ENCODE measurements at regions of chr5 and their contacts with region 1.

Region 1: DNA sequence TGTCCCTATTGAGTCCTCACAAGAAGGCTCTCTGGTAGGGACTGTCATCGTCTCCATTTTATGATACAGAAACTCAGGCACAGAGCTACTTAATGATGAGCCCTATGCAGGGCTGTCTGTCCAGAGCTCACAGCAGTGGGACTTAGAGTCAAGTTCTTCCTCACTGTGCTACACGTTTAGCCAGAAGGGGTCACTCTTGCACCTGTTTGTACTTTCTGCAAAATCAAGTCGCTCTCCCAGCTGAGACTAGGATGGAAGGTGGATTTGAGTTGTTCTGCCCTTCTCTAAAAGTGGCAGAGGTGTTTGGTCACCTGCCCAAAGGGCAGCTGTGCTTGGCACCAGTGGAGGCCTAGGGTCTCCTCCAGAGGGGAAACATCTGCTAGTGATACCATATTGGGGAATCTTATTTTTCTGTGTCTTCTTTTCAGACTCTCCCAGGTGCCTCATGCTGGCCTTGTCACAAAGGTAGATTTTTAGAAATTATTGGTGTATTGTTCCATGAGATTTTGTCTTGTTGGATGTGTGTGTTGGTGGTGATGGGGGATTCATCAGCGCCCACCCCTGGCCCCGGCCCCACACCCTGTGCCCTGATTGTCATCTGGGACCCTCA is 104.2 kb downstream of the PPARGC1B start:
- DNase-seq: peak; percentile 86
- H3K4me3 ChIP-seq: no peak overlapping the region
- H3K27ac ChIP-seq: no peak overlapping the region
- H3K4me1 ChIP-seq: peaks cover 1% of the 10 kb centered on the region
- H3K27me3 ChIP-seq: no peaks in the 10 kb centered on the region
- CTCF ChIP-seq: peak; percentile 79 to 80
- POLR2A ChIP-seq: no peak

Region 2: GRCh38 chr5:149636851-149637246 is 197.5 kb before region 1 on chr5:
- CTCF ChIA-PET with region 1: interaction called, 278 read pairs
- POLR2A ChIA-PET with region 1: no interaction called
- dilution Hi-C with region 1: loop called (anchors 10 kb)
- intact Hi-C with region 1: no loop called
- DNase-seq: peak; percentile 57
- H3K4me3 ChIP-seq: no peak overlapping the region
- H3K27ac ChIP-seq: no peak overlapping the region
- H3K4me1 ChIP-seq: peaks cover 12% of the 10 kb centered on the region
- H3K27me3 ChIP-seq: no peaks in the 10 kb centered on the region
- CTCF ChIP-seq: peak; percentile 72 to 74
- POLR2A ChIP-seq: no peak

Region 3: DNA sequence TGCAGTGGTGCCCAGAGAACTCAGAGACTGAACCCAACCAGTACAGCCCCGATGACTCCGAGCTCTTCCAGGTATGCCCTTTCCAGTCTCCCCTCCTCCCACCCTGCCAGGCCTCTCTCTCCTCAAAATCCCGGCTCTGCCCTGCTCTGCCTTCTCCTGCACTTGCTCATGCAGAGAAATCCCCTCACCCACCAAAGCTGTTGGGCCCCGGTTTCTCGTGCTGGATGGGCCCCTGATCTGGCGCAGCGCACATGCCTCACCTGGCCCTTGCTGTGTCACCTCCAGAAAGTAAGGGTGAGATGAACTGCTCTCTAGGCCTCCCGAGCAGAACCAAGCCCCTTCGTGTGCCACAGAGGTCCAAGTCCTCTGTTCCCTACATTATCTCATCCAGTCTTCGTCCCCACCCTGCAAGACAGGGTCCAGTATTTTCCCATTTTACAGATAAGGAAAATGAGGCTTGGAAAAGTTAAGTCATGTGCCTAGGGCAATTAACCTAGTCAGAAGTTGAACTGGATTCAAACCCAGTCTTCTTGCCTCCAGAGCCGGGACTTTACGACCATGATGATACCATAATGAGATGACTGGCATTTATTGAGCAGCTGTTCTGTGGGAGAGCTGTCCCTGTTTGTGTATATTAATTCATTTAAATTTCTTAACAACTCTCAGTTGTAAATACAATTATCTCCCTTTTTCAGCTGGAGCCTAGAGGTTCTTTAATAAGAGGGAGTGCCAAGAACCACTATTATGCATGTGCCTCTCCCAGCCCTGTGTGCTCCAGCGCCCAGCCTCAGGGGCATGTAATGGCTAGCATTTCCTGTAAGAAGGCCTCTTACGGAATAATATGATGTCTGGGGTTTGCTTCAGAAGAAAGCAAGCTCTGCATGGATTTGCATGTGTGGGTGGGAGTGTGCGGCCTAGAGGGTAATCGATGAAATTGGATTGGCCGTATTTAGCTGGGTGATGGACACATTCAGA is 13.5 kb before region 1 on chr5:
- CTCF ChIA-PET with region 1: interaction called, 26 read pairs
- POLR2A ChIA-PET with region 1: no interaction called
- dilution Hi-C with region 1: no loop called
- intact Hi-C with region 1: no loop called
- DNase-seq: no peak
- H3K4me3 ChIP-seq: no peak overlapping the region
- H3K27ac ChIP-seq: no peak overlapping the region
- H3K4me1 ChIP-seq: no peaks in the 10 kb centered on the region
- H3K27me3 ChIP-seq: no peaks in the 10 kb centered on the region
- CTCF ChIP-seq: no peak
- POLR2A ChIP-seq: no peak

Region 4: GRCh38 chr5:149852641-149853330 is 18.4 kb after region 1 on chr5:
- CTCF ChIA-PET with region 1: interaction called, 295 read pairs
- POLR2A ChIA-PET with region 1: no interaction called
- dilution Hi-C with region 1: no loop called
- intact Hi-C with region 1: loop called (anchors 1 kb)
- DNase-seq: peak; percentile 75
- H3K4me3 ChIP-seq: no peak overlapping the region
- H3K27ac ChIP-seq: no peak overlapping the region
- H3K4me1 ChIP-seq: peaks cover 7% of the 10 kb centered on the region
- H3K27me3 ChIP-seq: no peaks in the 10 kb centered on the region
- CTCF ChIP-seq: peak; percentile 89 to 98
- POLR2A ChIP-seq: no peak

Region 5: GRCh38 chr5:149979896-149980295 is 145.5 kb after region 1 on chr5:
- CTCF ChIA-PET with region 1: interaction called, 22 read pairs
- POLR2A ChIA-PET with region 1: no interaction called
- dilution Hi-C with region 1: no loop called
- intact Hi-C with region 1: no loop called
- DNase-seq: no peak
- H3K4me3 ChIP-seq: no peak overlapping the region
- H3K27ac ChIP-seq: no peak overlapping the region
- H3K4me1 ChIP-seq: no peaks in the 10 kb centered on the region
- H3K27me3 ChIP-seq: no peaks in the 10 kb centered on the region
- CTCF ChIP-seq: no peak
- POLR2A ChIP-seq: no peak

Region 6: GRCh38 chr5:150155258-150156026 is 321.1 kb after region 1 on chr5 and contains the start of gene PDGFRB:
- CTCF ChIA-PET with region 1: no interaction called
- POLR2A ChIA-PET with region 1: no interaction called
- dilution Hi-C with region 1: no loop called
- intact Hi-C with region 1: no loop called
- DNase-seq: peak; percentile 56
- H3K4me3 ChIP-seq: peak within 1 kb of the TSS in 2 of 3 experiments; percentile 14 to 26
- H3K27ac ChIP-seq: no peak within 1 kb of the TSS
- H3K4me1 ChIP-seq: peaks cover 5% of the 10 kb centered on the region
- H3K27me3 ChIP-seq: peaks cover 0 to 5% of the 10 kb centered on the region in 2 experiments
- CTCF ChIP-seq: no peak
- POLR2A ChIP-seq: no peak
- total RNA-seq, gene PDGFRB: 1.0 and 1.7 TPM in 2 replicates

Measured in endothelial cell of umbilical vein (primary cell).